ENCODE measurements at regions of chr12 and their contacts with region 1.

Region 1: DNA sequence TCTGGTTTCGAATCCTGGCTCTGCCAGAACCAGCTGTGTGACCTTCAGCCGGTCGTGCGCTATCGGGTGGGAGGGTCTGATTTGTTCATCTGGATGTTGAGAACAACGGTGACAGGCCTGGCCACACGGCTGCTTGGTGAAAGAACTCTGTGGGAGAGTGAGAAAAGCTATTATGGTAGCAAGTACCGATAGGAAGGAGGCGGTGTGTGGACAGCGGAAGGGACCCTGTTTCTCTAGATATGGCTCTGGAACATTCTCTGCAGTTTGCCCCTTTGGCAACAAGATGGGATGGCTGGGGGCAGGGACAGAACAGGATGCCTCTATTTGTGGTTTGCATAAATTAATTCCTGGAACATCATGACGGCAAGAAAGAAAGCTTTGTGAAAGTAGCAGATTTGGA is 347.3 kb downstream of the AACS start:
- DNase-seq: no peak
- H3K4me3 ChIP-seq: no peak overlapping the region
- H3K27ac ChIP-seq: no peak overlapping the region
- H3K4me1 ChIP-seq: no peaks in the 10 kb centered on the region
- H3K27me3 ChIP-seq: no peaks in the 10 kb centered on the region
- CTCF ChIP-seq: no peak
- POLR2A ChIP-seq: no peak

Region 2: GRCh38 chr12:124884587-124885438 is 527.7 kb before region 1 on chr12:
- intact Hi-C with region 1: no loop called
- DNase-seq: no peak
- H3K4me3 ChIP-seq: no peak overlapping the region
- H3K27ac ChIP-seq: no peak overlapping the region
- H3K4me1 ChIP-seq: no peaks in the 10 kb centered on the region
- H3K27me3 ChIP-seq: no peaks in the 10 kb centered on the region
- CTCF ChIP-seq: no peak
- POLR2A ChIP-seq: no peak

Region 3: GRCh38 chr12:125443341-125443740 is 30.8 kb after region 1 on chr12:
- intact Hi-C with region 1: no loop called
- DNase-seq: no peak
- H3K4me3 ChIP-seq: no peak overlapping the region
- H3K27ac ChIP-seq: no peak overlapping the region
- H3K4me1 ChIP-seq: no peaks in the 10 kb centered on the region
- H3K27me3 ChIP-seq: no peaks in the 10 kb centered on the region
- CTCF ChIP-seq: no peak
- POLR2A ChIP-seq: no peak

Region 4: DNA sequence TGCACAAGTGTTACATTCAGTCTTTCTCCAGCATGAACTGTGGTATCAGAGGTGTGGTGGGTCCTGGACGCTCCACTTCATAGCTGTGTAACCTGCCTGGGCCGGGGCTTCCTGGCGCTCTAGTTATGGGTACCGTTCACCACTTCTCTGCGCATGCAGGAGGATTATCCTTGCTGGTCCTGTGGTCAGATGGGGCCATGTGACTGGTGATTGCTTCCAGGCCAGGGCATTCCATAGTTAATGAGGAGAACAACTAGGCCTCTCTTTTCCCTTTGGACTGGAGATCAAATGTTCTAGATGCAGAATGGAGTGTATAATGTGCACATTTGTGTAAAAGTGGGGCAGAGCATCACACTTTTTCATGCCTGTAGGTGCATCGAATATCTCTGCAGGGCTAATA is 96.7 kb after region 1 on chr12:
- intact Hi-C with region 1: loop called (anchors 5 kb)
- DNase-seq: no peak
- H3K4me3 ChIP-seq: no peak overlapping the region
- H3K27ac ChIP-seq: no peak overlapping the region
- H3K4me1 ChIP-seq: no peaks in the 10 kb centered on the region
- H3K27me3 ChIP-seq: no peaks in the 10 kb centered on the region
- CTCF ChIP-seq: no peak
- POLR2A ChIP-seq: no peak